ENCODE measurements at regions of chr11 and their contacts with region 1.

Region 1: GRCh38 chr11:121194731-121195596 is 93.9 kb downstream of the TECTA start:
- DNase-seq: peak; percentile 63
- ATAC-seq: peak; percentile 99
- H3K4me3 ChIP-seq: peak overlapping the region; percentile 1 to 27; a peak in 2 of 4 replicates
- H3K27ac ChIP-seq: no peak overlapping the region
- H3K4me1 ChIP-seq: peaks cover 0 to 7% of the 10 kb centered on the region in 2 experiments; a peak in 2 of 4 replicates
- H3K27me3 ChIP-seq: no peaks in the 10 kb centered on the region; the same call in 1 of the 2 replicates
- CTCF ChIP-seq: peak; percentile 71 to 84 (median 76)
- POLR2A ChIP-seq: no peak
- RAD21 ChIP-seq: peak; percentile 91

Region 2: GRCh38 chr11:120660024-120660565 is 534.9 kb before region 1 on chr11:
- CTCF ChIA-PET with region 1: no interaction called
- POLR2A ChIA-PET with region 1: no interaction called
- RAD21 ChIA-PET with region 1: no interaction called
- intact Hi-C with region 1: loop called (anchors 5 kb)
- DNase-seq: peak; percentile 46
- ATAC-seq: peak; percentile 89
- H3K4me3 ChIP-seq: peak overlapping the region in 1 of 2 experiments; percentile 13; a peak in 1 of 4 replicates
- H3K27ac ChIP-seq: no peak overlapping the region
- H3K4me1 ChIP-seq: peaks cover 0 to 14% of the 10 kb centered on the region in 2 experiments; a peak in 2 of 4 replicates
- H3K27me3 ChIP-seq: peaks cover 26% of the 10 kb centered on the region
- CTCF ChIP-seq: peak; percentile 67 to 86 (median 76)
- POLR2A ChIP-seq: no peak
- RAD21 ChIP-seq: peak; percentile 60

Region 3: GRCh38 chr11:121207485-121208115 is 12.6 kb after region 1 on chr11:
- CTCF ChIA-PET with region 1: interaction called, 15 read pairs
- POLR2A ChIA-PET with region 1: no interaction called
- RAD21 ChIA-PET with region 1: no interaction called
- intact Hi-C with region 1: no loop called
- DNase-seq: no peak
- ATAC-seq: no peak
- H3K4me3 ChIP-seq: no peak overlapping the region
- H3K27ac ChIP-seq: no peak overlapping the region
- H3K4me1 ChIP-seq: no peaks in the 10 kb centered on the region
- H3K27me3 ChIP-seq: no peaks in the 10 kb centered on the region
- CTCF ChIP-seq: no peak
- POLR2A ChIP-seq: no peak
- RAD21 ChIP-seq: no peak

Measured in HCT116 (cell line).